Ovary (tissue), 10 donors: ENCODE measurements at regions of chr2 and their contacts with region 1.

Region 1: DNA sequence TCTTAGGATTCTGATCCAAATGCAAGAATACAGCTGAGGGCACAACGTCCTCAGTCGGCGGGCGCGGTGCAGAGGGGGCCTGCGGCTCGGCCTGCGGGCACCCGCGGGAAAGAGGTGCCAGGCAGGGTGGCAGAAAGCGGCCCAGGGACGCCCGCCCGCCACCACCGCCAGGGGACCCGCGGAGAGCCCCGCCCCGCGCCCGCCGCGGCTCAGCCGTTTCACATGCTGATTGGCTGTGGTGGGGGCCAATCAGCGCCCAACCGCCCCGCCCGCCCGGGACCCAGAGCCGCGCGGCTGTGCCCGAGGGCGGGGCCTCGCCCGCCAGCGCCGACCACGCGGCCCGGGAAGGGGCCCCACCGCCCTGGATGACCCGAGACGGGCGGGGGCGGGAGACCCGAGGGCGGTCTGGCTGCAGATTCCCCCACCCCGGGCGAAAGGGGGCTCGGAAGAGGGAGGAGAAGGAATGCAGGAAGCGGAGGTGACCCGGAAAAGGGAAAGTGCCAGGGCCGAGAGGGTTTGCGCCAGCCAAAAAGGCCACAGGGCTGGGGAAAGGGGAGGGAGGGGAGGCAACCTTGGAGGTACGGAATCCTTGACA is 8.0 kb downstream of the IRS1 start:
- DNase-seq: peak; percentile 89 to 94 (median 90)
- H3K4me3 ChIP-seq: peak overlapping the region; percentile 93
- H3K27ac ChIP-seq: peak overlapping the region; percentile 90 to 96
- H3K4me1 ChIP-seq: peaks cover 6% of the 10 kb centered on the region
- H3K27me3 ChIP-seq: no peaks in the 10 kb centered on the region
- CTCF ChIP-seq: peak; percentile 40 to 88 (median 84)
- EP300 ChIP-seq: no peak
- POLR2A ChIP-seq: peak; percentile 58

Region 2: DNA sequence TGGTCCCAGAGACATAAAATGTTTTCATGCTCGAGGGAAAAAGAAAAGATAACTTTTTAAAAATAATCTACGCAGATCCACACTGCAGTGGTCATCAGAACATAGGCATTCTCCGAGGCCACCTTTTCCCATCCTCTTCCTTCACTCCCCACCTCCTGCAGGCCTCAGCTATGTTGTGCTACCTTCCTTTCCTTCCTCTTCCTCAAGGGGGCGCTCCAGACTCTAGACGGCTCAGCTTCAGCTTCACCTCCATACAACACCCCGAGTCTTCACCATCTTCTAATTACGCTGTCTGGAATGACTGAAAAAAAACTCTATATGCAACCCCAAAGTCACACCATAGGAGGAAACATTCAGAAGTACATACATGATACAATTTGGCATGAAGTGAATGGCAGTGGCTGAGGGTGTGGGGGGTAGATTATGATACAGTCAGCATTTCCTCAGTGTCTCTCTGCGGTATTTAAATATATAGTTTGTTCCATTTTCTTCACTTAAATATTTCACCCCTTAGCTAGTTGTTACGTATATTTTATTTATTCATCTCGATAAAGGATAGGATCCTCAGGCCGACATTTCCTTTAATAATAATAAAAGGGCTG is 575.6 kb before region 1 on chr2:
- intact Hi-C with region 1: loop called in 2 of 4 experiments (anchors 5 to 10 kb)
- DNase-seq: peak; percentile 39 to 74 (median 45)
- H3K4me3 ChIP-seq: no peak overlapping the region
- H3K27ac ChIP-seq: no peak overlapping the region
- H3K4me1 ChIP-seq: peaks cover 1% of the 10 kb centered on the region
- H3K27me3 ChIP-seq: no peaks in the 10 kb centered on the region
- CTCF ChIP-seq: peak in 1 of 3 donors; percentile 42
- EP300 ChIP-seq: no peak
- POLR2A ChIP-seq: no peak

Region 3: GRCh38 chr2:226378753-226379580 is 412.6 kb before region 1 on chr2:
- intact Hi-C with region 1: no loop called
- DNase-seq: no peak
- H3K4me3 ChIP-seq: no peak overlapping the region
- H3K27ac ChIP-seq: no peak overlapping the region
- H3K4me1 ChIP-seq: no peaks in the 10 kb centered on the region
- H3K27me3 ChIP-seq: no peaks in the 10 kb centered on the region
- CTCF ChIP-seq: no peak
- EP300 ChIP-seq: no peak
- POLR2A ChIP-seq: no peak

Region 4: DNA sequence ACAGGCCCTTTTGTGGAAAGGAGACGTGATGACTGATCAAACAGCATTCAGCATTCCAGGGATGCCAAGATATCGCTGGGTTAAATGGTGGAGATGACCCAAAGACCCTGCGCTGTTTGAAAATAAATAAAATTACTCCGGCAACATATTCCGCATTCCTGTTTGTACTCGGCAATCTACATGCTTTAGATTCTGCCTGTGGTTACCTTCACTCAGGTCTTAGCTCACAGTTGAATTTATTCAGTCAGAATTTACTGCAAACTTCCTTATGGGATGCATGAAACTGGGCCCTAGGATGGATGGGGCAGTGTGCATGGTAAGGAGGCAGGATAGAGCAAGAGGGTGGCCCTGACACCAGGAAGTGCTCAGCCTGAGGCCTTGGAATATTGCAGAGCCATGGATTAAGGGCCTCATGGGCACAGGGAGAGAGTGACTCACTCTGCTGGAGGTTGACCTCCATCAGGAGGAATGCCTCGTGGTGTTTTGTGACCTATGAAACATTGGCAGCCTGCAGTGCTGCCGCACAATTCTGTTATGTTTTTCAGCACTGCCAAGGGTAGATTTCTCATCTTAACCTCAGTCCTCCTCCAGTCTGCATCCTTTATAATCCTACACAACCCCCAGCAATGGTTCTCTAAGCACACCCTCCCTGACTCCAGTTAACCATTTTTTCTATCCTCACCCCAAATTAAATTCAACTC is 313.3 kb before region 1 on chr2:
- intact Hi-C with region 1: loop called in 3 of 4 experiments (anchors 5 to 10 kb)
- DNase-seq: peak; percentile 49 to 70 (median 62)
- H3K4me3 ChIP-seq: no peak overlapping the region
- H3K27ac ChIP-seq: peak overlapping the region in 1 of 2 donors; percentile 70
- H3K4me1 ChIP-seq: peaks cover 2% of the 10 kb centered on the region
- H3K27me3 ChIP-seq: no peaks in the 10 kb centered on the region
- CTCF ChIP-seq: no peak
- EP300 ChIP-seq: no peak
- POLR2A ChIP-seq: no peak

Region 5: GRCh38 chr2:226578879-226579278 is 212.7 kb before region 1 on chr2:
- intact Hi-C with region 1: no loop called
- DNase-seq: no peak
- H3K4me3 ChIP-seq: no peak overlapping the region
- H3K27ac ChIP-seq: no peak overlapping the region
- H3K4me1 ChIP-seq: no peaks in the 10 kb centered on the region
- H3K27me3 ChIP-seq: no peaks in the 10 kb centered on the region
- CTCF ChIP-seq: no peak
- EP300 ChIP-seq: no peak
- POLR2A ChIP-seq: no peak

Region 6: DNA sequence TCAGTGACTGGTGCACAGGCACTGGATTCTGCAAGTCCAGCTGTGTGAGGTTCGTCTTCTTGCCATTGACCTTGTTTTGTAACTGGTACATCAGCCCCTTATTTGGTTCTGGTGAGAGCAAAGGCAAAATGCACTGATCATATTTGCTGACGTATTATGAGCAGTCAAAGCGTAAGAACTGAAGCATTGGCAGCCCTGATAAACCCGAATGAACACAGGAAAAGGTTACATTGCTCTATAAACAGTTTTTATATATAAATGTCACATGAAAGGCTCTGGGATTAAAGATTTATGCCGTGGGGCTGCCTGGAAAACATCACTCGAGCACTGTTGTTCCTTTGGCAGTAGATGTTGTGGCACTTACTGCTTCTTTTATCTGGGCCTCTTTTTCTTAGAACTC is 159.9 kb before region 1 on chr2:
- intact Hi-C with region 1: loop called in 3 of 4 experiments (anchors 2 to 10 kb)
- DNase-seq: peak; percentile 47 to 72 (median 63)
- H3K4me3 ChIP-seq: no peak overlapping the region
- H3K27ac ChIP-seq: peak overlapping the region in 1 of 2 donors; percentile 79
- H3K4me1 ChIP-seq: peaks cover 5% of the 10 kb centered on the region
- H3K27me3 ChIP-seq: no peaks in the 10 kb centered on the region
- CTCF ChIP-seq: peak in 1 of 3 donors; percentile 3
- EP300 ChIP-seq: peak; percentile 29
- POLR2A ChIP-seq: no peak

Region 7: GRCh38 chr2:226721541-226721940 is 70.0 kb before region 1 on chr2:
- intact Hi-C with region 1: loop called in 1 of 4 experiments (anchors 1 kb)
- DNase-seq: peak; percentile 54 to 77 (median 66)
- H3K4me3 ChIP-seq: no peak overlapping the region
- H3K27ac ChIP-seq: no peak overlapping the region
- H3K4me1 ChIP-seq: peaks cover 15% of the 10 kb centered on the region
- H3K27me3 ChIP-seq: no peaks in the 10 kb centered on the region
- CTCF ChIP-seq: no peak
- EP300 ChIP-seq: no peak
- POLR2A ChIP-seq: no peak

Region 8: GRCh38 chr2:226742347-226742746 is 49.2 kb before region 1 on chr2:
- intact Hi-C with region 1: loop called in 2 of 4 experiments (anchors 5 to 10 kb)
- DNase-seq: peak in 4 of 5 donors; percentile 31 to 55 (median 47)
- H3K4me3 ChIP-seq: no peak overlapping the region
- H3K27ac ChIP-seq: peak overlapping the region in 1 of 2 donors; percentile 69
- H3K4me1 ChIP-seq: peaks cover 28% of the 10 kb centered on the region
- H3K27me3 ChIP-seq: no peaks in the 10 kb centered on the region
- CTCF ChIP-seq: no peak
- EP300 ChIP-seq: no peak
- POLR2A ChIP-seq: no peak